CD8-positive, alpha-beta memory T cell (primary cell): ENCODE measurements at regions of chr3 and their contacts with region 1.

Region 1: DNA sequence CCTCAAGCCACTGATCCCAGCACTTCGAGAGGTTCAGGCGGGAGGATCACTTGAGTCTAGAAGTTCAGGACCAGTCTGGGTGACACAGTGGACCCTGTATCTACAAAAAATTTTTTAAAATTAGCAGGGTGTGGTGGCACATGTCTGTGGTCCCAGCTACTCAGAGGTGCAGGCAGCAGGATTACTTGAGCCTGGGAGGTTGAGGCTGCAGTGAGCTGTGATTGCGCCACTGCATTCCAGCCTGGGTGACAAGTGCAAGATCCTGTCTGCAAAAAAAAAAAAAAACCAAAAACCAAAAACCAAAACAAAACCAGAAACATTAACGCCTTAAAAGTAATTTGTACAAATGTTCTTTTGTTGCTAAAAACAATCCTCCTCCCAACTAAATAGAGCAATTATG is 27.9 kb upstream of the SLC12A8 start:
- DNase-seq: no peak
- H3K4me3 ChIP-seq: no peak overlapping the region
- H3K4me3 Mint-ChIP-seq: peak overlapping the region in 1 of 7 donors; percentile 21
- H3K27ac ChIP-seq: no peak overlapping the region
- H3K27ac Mint-ChIP-seq: peak overlapping the region in 1 of 8 donors; percentile 13
- H3K4me1 ChIP-seq: no peaks in the 10 kb centered on the region
- H3K4me1 Mint-ChIP-seq: peaks cover 12 to 32% (median 21%) of the 10 kb centered on the region in 3 donors
- H3K27me3 ChIP-seq: no peaks in the 10 kb centered on the region
- H3K27me3 Mint-ChIP-seq: peaks cover 0 to 1% of the 10 kb centered on the region in 2 donors

Region 2: DNA sequence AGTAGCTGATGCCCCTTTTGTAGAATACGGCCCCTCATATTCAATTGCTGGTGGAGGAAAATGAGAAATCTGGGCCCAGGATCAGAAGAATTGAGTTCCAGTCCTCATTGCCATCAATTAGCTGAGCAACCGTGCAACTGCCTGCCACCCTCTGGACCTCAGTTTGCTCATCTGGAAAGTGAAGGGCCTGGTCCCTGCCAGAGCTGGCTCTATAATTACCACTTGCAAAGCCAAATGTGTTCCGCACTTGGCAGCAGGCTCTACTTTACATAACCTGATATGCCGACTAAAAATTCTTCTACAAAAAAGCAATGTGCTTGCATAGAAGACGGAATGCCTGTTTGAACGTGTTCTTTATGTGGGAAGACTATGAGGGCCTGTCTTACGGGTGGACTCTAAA is 344.7 kb before region 1 on chr3:
- CTCF ChIA-PET with region 1: no interaction called
- POLR2A ChIA-PET with region 1: interaction called, 22 read pairs
- DNase-seq: no peak
- H3K4me3 ChIP-seq: no peak overlapping the region
- H3K4me3 Mint-ChIP-seq: no peak overlapping the region
- H3K27ac ChIP-seq: no peak overlapping the region
- H3K27ac Mint-ChIP-seq: no peak overlapping the region
- H3K4me1 ChIP-seq: no peaks in the 10 kb centered on the region
- H3K4me1 Mint-ChIP-seq: peaks cover 4 to 9% (median 6%) of the 10 kb centered on the region in 3 donors
- H3K27me3 ChIP-seq: no peaks in the 10 kb centered on the region
- H3K27me3 Mint-ChIP-seq: peaks cover 6% of the 10 kb centered on the region in 2 donors